A549 (cell line): ENCODE measurements at regions of chrX and their contacts with region 1.

Region 1: GRCh38 chrX:54213603-54214002 is 30.5 kb upstream of the FAM120C start:
- DNase-seq: no peak
- ATAC-seq: no peak
- H3K4me3 ChIP-seq: no peak overlapping the region
- H3K27ac ChIP-seq: no peak overlapping the region
- H3K4me1 ChIP-seq: no peaks in the 10 kb centered on the region
- CTCF ChIP-seq: no peak
- EP300 ChIP-seq: no peak
- POLR2A ChIP-seq: no peak
- RAD21 ChIP-seq: no peak

Region 2: DNA sequence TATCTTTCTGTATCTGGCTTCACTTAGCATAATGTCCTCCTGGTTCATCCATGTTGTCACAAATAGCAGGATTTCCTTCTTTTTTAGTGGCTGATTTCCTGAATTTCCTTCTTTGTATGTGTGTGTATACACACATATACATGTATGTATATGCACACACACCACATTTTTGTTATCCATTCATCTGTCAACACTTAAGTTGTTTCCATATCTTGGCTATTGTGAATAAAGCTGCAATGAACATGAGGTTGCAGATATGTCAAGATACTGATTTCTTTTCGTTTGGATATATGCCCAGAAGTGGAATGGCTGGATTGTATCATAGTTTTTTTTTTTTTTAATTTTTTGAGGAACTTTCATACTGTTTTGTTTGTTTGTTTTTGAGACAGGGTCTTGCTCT is 68.1 kb after region 1 on chrX:
- CTCF ChIA-PET with region 1: no interaction called
- POLR2A ChIA-PET with region 1: interaction called, 10 read pairs
- DNase-seq: no peak
- ATAC-seq: no peak
- H3K4me3 ChIP-seq: no peak overlapping the region
- H3K27ac ChIP-seq: no peak overlapping the region
- H3K4me1 ChIP-seq: no peaks in the 10 kb centered on the region
- CTCF ChIP-seq: no peak
- EP300 ChIP-seq: no peak
- POLR2A ChIP-seq: no peak
- RAD21 ChIP-seq: no peak